MCF 10A (cell line): ENCODE measurements at regions of chr2 and their contacts with region 1.

Region 1: GRCh38 chr2:191165176-191165643 is 14.4 kb upstream of the STAT4 start:
- DNase-seq: peak; percentile 71
- H3K4me3 Mint-ChIP-seq: no peak overlapping the region
- H3K27ac Mint-ChIP-seq: no peak overlapping the region
- H3K4me1 Mint-ChIP-seq: peaks cover 36% of the 10 kb centered on the region
- H3K27me3 Mint-ChIP-seq: no peaks in the 10 kb centered on the region
- CTCF ChIP-seq: peak; percentile 51

Region 2: GRCh38 chr2:191369036-191369435 is 203.8 kb after region 1 on chr2:
- CTCF ChIA-PET with region 1: interaction called, 13 read pairs
- POLR2A ChIA-PET with region 1: no interaction called
- intact Hi-C with region 1: loop called (anchors 1 kb)
- DNase-seq: no peak
- H3K4me3 Mint-ChIP-seq: no peak overlapping the region
- H3K27ac Mint-ChIP-seq: no peak overlapping the region
- H3K4me1 Mint-ChIP-seq: no peaks in the 10 kb centered on the region
- H3K27me3 Mint-ChIP-seq: no peaks in the 10 kb centered on the region
- CTCF ChIP-seq: peak; percentile 35

Region 3: DNA sequence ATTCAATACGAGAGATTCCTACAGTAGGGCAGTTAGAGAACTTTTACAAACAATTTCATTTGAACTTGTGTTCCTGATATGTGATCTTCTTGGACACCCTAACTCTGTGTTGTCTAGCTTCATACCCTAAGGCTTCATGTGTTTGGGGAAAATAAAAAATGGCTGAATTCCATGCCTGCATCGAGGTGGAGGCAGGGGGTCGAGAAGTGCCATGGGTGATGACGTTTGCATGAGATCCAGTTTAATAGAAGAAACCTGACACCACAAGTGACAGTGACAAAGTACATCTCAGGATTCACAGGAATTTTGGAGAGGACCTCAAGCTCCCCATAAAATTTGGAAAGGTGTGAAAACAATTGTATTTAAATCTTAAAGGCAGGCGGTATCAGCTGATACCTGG is 343.5 kb after region 1 on chr2:
- CTCF ChIA-PET with region 1: interaction called, 222 read pairs
- POLR2A ChIA-PET with region 1: interaction called, 4 read pairs
- intact Hi-C with region 1: no loop called
- DNase-seq: no peak
- H3K4me3 Mint-ChIP-seq: no peak overlapping the region
- H3K27ac Mint-ChIP-seq: no peak overlapping the region
- H3K4me1 Mint-ChIP-seq: no peaks in the 10 kb centered on the region
- H3K27me3 Mint-ChIP-seq: no peaks in the 10 kb centered on the region
- CTCF ChIP-seq: no peak

Region 4: GRCh38 chr2:191515551-191515950 is 350.3 kb after region 1 on chr2:
- CTCF ChIA-PET with region 1: interaction called, 16 read pairs
- POLR2A ChIA-PET with region 1: no interaction called
- intact Hi-C with region 1: no loop called
- DNase-seq: no peak
- H3K4me3 Mint-ChIP-seq: no peak overlapping the region
- H3K27ac Mint-ChIP-seq: no peak overlapping the region
- H3K4me1 Mint-ChIP-seq: no peaks in the 10 kb centered on the region
- H3K27me3 Mint-ChIP-seq: no peaks in the 10 kb centered on the region
- CTCF ChIP-seq: no peak

Region 5: DNA sequence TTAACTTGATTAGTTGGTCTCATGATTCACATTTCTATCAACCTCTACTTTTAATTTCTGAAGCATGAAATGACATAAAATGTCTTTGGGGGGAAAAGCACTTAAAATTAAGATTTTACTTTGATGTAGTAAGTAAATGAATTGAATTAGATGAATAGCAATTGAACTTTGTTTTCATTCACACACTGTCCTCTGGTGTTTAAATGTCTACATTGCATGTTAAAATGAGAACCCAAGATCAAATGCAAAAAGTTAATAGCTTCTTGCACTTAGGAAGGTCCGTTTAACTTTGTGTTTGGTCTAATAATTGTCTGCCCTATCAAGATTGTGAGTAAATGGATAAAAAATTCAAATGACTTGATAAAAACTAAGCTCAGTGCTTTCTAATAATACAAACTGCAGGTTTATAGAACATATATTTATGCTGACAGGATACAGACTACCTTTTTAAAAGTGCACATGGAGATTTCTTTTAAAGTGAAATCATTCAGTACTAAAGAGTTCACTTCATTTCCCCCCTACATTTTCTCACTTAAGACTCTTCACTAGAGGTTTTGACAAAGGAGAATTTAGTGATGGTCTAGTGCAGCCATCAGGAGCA is 356.5 kb after region 1 on chr2:
- CTCF ChIA-PET with region 1: interaction called, 98 read pairs
- POLR2A ChIA-PET with region 1: interaction called, 8 read pairs
- intact Hi-C with region 1: loop called (anchors 1 kb)
- DNase-seq: peak; percentile 57
- H3K4me3 Mint-ChIP-seq: no peak overlapping the region
- H3K27ac Mint-ChIP-seq: no peak overlapping the region
- H3K4me1 Mint-ChIP-seq: no peaks in the 10 kb centered on the region
- H3K27me3 Mint-ChIP-seq: no peaks in the 10 kb centered on the region
- CTCF ChIP-seq: peak; percentile 51

Region 6: GRCh38 chr2:191728750-191729624 is 563.8 kb after region 1 on chr2:
- CTCF ChIA-PET with region 1: no interaction called
- POLR2A ChIA-PET with region 1: no interaction called
- intact Hi-C with region 1: no loop called
- DNase-seq: peak; percentile 24
- H3K4me3 Mint-ChIP-seq: no peak overlapping the region
- H3K27ac Mint-ChIP-seq: no peak overlapping the region
- H3K4me1 Mint-ChIP-seq: no peaks in the 10 kb centered on the region
- H3K27me3 Mint-ChIP-seq: no peaks in the 10 kb centered on the region
- CTCF ChIP-seq: no peak